K562 (cell line): ENCODE measurements at regions of chr4 and their contacts with region 1.

Region 1: GRCh38 chr4:86961605-86962295 is 26.9 kb downstream of the AFF1 start:
- DNase-seq: peak; percentile 35 to 91 (median 64)
- ATAC-seq: peak; percentile 94
- H3K4me3 ChIP-seq: no peak overlapping the region; the same call in 1 of the 2 replicates
- H3K27ac ChIP-seq: peak overlapping the region; percentile 87
- H3K4me1 ChIP-seq: peaks cover 9 to 47% of the 10 kb centered on the region in 2 experiments; a peak in 4 of 5 replicates
- H3K27me3 ChIP-seq: no peaks in the 10 kb centered on the region
- CTCF ChIP-seq: peak in 1 of 3 experiments; percentile 15; a peak in 1 of 6 replicates
- EP300 ChIP-seq: peak; percentile 99
- POLR2A ChIP-seq: no peak
- RAD21 ChIP-seq: peak in 1 of 2 experiments; percentile 28; a peak in 1 of 4 replicates

Region 2: DNA sequence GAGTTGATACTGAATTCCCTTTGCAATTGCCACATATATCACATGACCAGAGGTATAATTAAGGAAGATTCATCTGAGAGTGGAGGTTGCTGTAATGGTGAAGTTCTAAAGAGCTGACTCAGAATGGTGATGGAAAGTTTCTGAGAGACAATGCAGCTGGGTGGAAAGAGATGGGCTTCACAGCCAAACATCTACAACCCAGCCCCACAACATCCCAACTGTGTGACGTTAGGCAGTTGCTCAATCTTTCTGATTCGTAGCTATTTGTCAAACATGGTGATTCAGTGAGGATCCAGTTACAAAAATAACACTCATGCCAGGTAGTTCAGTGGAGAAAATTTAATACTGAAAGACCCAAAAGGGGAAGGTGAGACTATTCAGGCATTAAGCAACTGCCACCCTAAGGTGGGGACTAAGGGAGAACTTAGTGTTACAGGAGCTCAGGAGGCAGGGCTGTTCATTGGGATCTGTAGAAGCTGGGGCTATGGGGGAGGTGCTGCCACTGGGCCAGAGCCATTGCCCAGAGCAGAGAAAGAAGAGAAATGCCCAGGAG is 33.8 kb before region 1 on chr4:
- CTCF ChIA-PET with region 1: no interaction called
- POLR2A ChIA-PET with region 1: interaction called, 3 read pairs
- in situ Hi-C with region 1: no loop called
- intact Hi-C with region 1: loop called (anchors 5 kb)
- DNase-seq: no peak
- ATAC-seq: peak; percentile 43
- H3K4me3 ChIP-seq: no peak overlapping the region
- H3K27ac ChIP-seq: no peak overlapping the region; the same call in 2 of the 3 replicates
- H3K4me1 ChIP-seq: peaks cover 3 to 22% of the 10 kb centered on the region in 2 experiments; a peak in 4 of 5 replicates
- H3K27me3 ChIP-seq: no peaks in the 10 kb centered on the region
- CTCF ChIP-seq: no peak
- EP300 ChIP-seq: no peak
- POLR2A ChIP-seq: no peak
- RAD21 ChIP-seq: no peak

Region 3: DNA sequence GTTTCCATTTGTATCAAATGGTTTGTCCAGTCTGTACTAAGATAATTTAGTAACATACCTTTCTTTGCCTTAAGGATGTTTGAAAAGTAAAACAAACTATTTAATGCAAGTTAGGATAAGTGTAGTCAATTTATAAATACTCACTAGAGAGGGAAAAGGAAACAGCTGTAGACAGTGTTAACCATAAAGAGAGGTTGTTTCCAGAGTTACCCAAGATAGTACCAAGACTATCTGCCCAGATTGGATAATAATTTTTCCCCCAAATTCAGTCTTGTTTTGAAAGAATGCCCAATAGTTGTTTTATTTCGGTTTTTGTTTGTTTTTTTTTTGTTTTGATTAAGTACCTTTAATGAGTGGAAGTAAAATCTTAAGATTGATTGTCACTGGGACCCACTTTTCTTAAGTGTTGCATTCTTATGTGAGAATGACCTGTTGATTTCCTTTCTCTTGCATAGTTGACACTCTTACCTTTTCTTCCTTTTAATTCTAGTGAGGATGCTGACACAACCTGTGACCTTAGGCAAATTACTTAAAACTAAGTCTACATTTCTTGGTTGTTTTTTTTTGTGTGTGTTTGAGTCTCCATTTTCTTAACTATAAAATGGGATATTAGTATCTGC is 14.1 kb before region 1 on chr4:
- CTCF ChIA-PET with region 1: no interaction called
- POLR2A ChIA-PET with region 1: interaction called, 4 read pairs
- in situ Hi-C with region 1: no loop called
- intact Hi-C with region 1: loop called (anchors 2 kb)
- DNase-seq: no peak
- ATAC-seq: no peak
- H3K4me3 ChIP-seq: no peak overlapping the region
- H3K27ac ChIP-seq: peak overlapping the region; percentile 34; the same call in 1 of the 3 replicates
- H3K4me1 ChIP-seq: peaks cover 9 to 39% of the 10 kb centered on the region in 2 experiments
- H3K27me3 ChIP-seq: no peaks in the 10 kb centered on the region
- CTCF ChIP-seq: no peak
- EP300 ChIP-seq: no peak
- POLR2A ChIP-seq: no peak
- RAD21 ChIP-seq: no peak